Ascending aorta (tissue), 2 donors: ENCODE measurements at regions of chr12 and their contacts with region 1.

Region 1: GRCh38 chr12:55926738-55927587 is 731 bp downstream of the PYM1 start:
- DNase-seq: peak; percentile 78 to 96
- H3K4me3 ChIP-seq: peak overlapping the region; percentile 88 to 98
- H3K27ac ChIP-seq: peak overlapping the region; percentile 97 to 99
- H3K4me1 ChIP-seq: peaks cover 5 to 15% of the 10 kb centered on the region in 2 donors
- H3K27me3 ChIP-seq: no peaks in the 10 kb centered on the region
- CTCF ChIP-seq: peak; percentile 70 to 90 (median 80)

Region 2: DNA sequence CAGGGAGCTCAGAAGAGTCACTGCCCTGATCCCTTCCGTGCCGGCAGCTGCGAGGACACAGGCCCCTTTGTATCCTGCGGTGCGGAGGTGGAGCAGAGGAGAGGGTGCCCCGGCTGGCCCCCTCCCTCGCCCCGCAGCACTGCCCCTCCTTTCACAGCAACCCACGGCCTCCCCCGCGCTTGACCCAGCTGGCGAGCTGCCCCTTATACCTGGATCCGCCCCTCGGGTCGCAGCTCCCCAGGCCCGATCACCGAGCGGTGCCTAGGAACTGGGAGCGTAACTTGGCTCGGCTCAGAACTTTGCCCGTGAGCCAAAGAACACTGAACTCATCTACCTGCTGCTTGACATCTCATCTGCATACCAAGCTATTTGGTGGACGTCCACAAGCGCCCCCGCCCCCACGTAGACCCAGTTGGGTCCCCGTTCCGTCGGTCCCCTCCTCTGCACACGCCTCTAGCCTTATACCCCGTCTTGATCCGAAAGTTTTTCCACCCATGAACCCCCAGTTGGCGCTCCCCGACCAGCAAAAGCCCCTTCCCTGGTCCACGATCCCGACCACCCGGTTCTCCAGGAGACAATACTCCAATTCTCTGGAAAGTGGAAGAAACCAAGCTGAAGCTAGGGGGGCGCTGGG is 96.9 kb before region 1 on chr12:
- intact Hi-C with region 1: loop called (anchors 1 kb)
- DNase-seq: peak in 1 of 2 donors; percentile 81
- H3K4me3 ChIP-seq: peak overlapping the region; percentile 75 to 99
- H3K27ac ChIP-seq: peak overlapping the region; percentile 92 to 99
- H3K4me1 ChIP-seq: peaks cover 8 to 32% of the 10 kb centered on the region in 2 donors
- H3K27me3 ChIP-seq: no peaks in the 10 kb centered on the region
- CTCF ChIP-seq: no peak

Region 3: GRCh38 chr12:55847603-55848291 is 79.2 kb before region 1 on chr12:
- intact Hi-C with region 1: loop called (anchors 1 kb)
- DNase-seq: peak; percentile 93 to 99
- H3K4me3 ChIP-seq: peak overlapping the region in 1 of 2 donors; percentile 26
- H3K27ac ChIP-seq: peak overlapping the region; percentile 99
- H3K4me1 ChIP-seq: peaks cover 4 to 51% of the 10 kb centered on the region in 2 donors
- H3K27me3 ChIP-seq: no peaks in the 10 kb centered on the region
- CTCF ChIP-seq: no peak

Region 4: DNA sequence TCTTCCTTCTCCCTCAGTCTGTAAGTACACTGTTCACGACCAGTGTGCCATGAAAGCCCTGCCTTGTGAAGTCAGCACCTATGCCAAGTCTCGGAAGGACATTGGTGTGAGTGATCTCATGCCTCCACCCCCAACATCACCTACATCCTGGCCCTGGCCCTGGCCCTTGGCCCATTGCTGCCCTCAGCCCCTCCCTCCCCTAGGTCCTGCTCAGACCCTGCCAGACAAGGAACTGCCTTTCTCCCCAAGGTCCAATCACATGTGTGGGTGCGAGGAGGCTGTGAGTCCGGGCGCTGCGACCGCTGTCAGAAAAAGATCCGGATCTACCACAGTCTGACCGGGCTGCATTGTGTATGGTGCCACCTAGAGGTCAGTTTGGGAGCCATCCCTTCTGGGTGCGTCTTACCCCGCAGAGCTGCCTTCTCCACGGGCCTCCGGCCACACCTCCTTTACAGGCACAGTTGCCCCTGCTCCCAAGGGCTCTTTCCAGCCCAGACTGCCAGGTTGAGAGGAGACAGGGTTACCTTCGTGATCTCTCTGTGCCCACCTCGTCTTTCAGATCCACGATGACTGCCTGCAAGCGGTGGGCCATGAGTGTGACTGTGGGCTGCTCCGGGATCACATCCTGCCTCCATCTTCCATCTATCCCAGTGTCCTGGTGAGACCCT is 13.2 kb after region 1 on chr12:
- intact Hi-C with region 1: loop called (anchors 1 kb)
- DNase-seq: peak; percentile 36 to 93
- H3K4me3 ChIP-seq: peak overlapping the region in 1 of 2 donors; percentile 42
- H3K27ac ChIP-seq: peak overlapping the region; percentile 53 to 71
- H3K4me1 ChIP-seq: peaks cover 0 to 7% of the 10 kb centered on the region in 2 donors
- H3K27me3 ChIP-seq: no peaks in the 10 kb centered on the region
- CTCF ChIP-seq: peak; percentile 83 to 90 (median 87)

Region 5: GRCh38 chr12:55966408-55967281 is 39.7 kb after region 1 on chr12 and contains the start of gene CDK2:
- intact Hi-C with region 1: loop called (anchors 2 kb)
- DNase-seq: peak; percentile 74 to 97
- H3K4me3 ChIP-seq: peak within 1 kb of the TSS; percentile 92
- H3K27ac ChIP-seq: peak within 1 kb of the TSS; percentile 83 to 93
- H3K4me1 ChIP-seq: peaks cover 0 to 9% of the 10 kb centered on the region in 2 donors
- H3K27me3 ChIP-seq: no peaks in the 10 kb centered on the region
- CTCF ChIP-seq: no peak
- total RNA-seq, gene CDK2: 24.5 TPM